ENCODE measurements at regions of chr6 and their contacts with region 1.

Region 1: GRCh38 chr6:111483736-111484632 is 966 bp upstream of the REV3L start:
- DNase-seq: peak; percentile 94 to 98
- H3K4me3 ChIP-seq: peak overlapping the region; percentile 76 to 86
- H3K27ac ChIP-seq: peak overlapping the region; percentile 99 to 100
- H3K4me1 ChIP-seq: peaks cover 0 to 7% of the 10 kb centered on the region in 2 donors
- H3K27me3 ChIP-seq: no peaks in the 10 kb centered on the region
- CTCF ChIP-seq: peak in 2 of 4 experiments; percentile 6 to 7
- POLR2A ChIP-seq: peak; percentile 24 to 81

Region 2: DNA sequence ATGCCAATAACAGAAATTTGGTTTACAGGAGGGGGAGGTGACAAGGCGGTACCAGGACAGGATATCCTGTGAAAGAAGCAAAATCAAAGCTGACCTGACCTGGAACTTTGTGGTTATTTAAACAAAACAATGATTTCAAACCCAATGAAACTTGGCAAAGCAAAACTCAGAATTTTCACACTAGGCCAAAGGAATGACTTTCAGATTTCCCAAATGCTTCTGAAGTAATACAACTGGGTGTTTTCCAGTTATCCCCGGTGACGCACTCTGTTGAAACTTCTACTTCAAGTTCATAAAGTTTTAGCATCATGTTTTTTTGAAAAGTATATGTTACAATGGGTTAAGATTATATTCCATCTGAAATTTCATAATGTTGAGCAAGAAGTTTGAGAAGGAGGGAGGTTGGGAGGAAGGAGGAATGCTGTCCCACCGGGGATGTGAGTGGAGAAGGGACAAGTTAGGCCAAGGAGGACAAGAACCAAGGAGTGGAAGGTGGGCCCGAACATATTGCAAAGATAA is 199.8 kb after region 1 on chr6:
- intact Hi-C with region 1: loop called (anchors 5 kb)
- DNase-seq: peak; percentile 58 to 87
- H3K4me3 ChIP-seq: no peak overlapping the region
- H3K27ac ChIP-seq: peak overlapping the region; percentile 68 to 84
- H3K4me1 ChIP-seq: peaks cover 0 to 4% of the 10 kb centered on the region in 2 donors
- H3K27me3 ChIP-seq: no peaks in the 10 kb centered on the region
- CTCF ChIP-seq: no peak
- POLR2A ChIP-seq: no peak

Region 3: DNA sequence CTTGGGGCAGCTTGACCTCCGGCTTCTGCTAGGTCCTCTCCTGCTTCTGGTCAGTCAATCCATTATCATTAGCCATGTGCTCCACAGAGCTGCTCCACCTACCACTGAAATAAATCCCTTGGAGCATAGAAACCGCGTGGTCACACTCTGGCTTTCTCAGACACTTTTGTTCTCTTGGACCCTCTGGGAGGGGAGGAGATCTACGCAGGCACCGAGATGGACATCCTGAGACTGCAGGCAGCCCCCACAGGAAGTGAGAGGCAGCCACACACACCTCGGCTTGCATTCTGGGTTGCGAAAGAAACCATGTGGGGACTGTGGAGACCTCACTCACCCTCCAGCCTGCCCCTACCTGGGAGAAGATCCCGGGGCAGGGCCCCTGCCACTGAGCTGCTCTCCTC is 309.7 kb after region 1 on chr6:
- intact Hi-C with region 1: no loop called
- DNase-seq: no peak
- H3K4me3 ChIP-seq: no peak overlapping the region
- H3K27ac ChIP-seq: peak overlapping the region in 1 of 2 donors; percentile 1
- H3K4me1 ChIP-seq: peaks cover 0 to 6% of the 10 kb centered on the region in 2 donors
- H3K27me3 ChIP-seq: no peaks in the 10 kb centered on the region
- CTCF ChIP-seq: no peak
- POLR2A ChIP-seq: no peak